CD14-positive monocyte (primary cell): ENCODE measurements at regions of chr3 and their contacts with region 1.

Region 1: DNA sequence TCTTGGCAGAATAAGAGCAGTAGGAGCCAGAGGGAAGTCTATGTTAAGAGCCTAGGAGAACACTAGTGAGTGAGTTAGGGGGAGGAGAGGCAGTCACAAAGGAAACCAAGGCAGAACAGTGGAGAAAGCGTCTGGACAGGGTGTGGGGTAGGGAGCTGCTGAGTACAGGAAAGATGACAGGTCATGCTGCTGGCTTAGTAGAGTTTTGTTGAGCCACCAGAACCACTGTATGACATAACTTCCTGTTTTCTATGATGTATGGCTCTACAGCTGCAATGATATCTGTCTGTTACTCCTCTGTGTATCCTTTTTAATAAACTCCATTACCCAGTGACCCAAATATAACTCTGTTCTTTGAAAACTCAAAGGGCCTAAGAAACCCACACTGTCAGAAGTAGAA is 10.6 kb upstream of the STT3B start:
- DNase-seq: peak; percentile 78 to 92 (median 88)
- H3K4me3 ChIP-seq: peak overlapping the region in 1 of 3 experiments; percentile 41
- H3K4me3 Mint-ChIP-seq: peak overlapping the region; percentile 2 to 55
- H3K27ac ChIP-seq: peak overlapping the region in 1 of 2 donors; percentile 57
- H3K27ac Mint-ChIP-seq: peak overlapping the region; percentile 61 to 91 (median 87)
- H3K4me1 ChIP-seq: peaks cover 8 to 12% of the 10 kb centered on the region in 2 donors
- H3K4me1 Mint-ChIP-seq: peaks cover 12% of the 10 kb centered on the region
- H3K27me3 ChIP-seq: no peaks in the 10 kb centered on the region
- H3K27me3 Mint-ChIP-seq: no peaks in the 10 kb centered on the region
- CTCF ChIP-seq: no peak

Region 2: GRCh38 chr3:31250116-31250777 is 271.9 kb before region 1 on chr3:
- intact Hi-C with region 1: loop called in 1 of 2 experiments (anchors 10 kb)
- DNase-seq: no peak
- H3K4me3 ChIP-seq: no peak overlapping the region
- H3K4me3 Mint-ChIP-seq: no peak overlapping the region
- H3K27ac ChIP-seq: no peak overlapping the region
- H3K27ac Mint-ChIP-seq: no peak overlapping the region
- H3K4me1 ChIP-seq: peaks cover 24 to 31% of the 10 kb centered on the region in 2 donors
- H3K4me1 Mint-ChIP-seq: peaks cover 40% of the 10 kb centered on the region
- H3K27me3 ChIP-seq: no peaks in the 10 kb centered on the region
- H3K27me3 Mint-ChIP-seq: peaks cover 0 to 1% (median 0%) of the 10 kb centered on the region in 3 donors
- CTCF ChIP-seq: no peak

Region 3: DNA sequence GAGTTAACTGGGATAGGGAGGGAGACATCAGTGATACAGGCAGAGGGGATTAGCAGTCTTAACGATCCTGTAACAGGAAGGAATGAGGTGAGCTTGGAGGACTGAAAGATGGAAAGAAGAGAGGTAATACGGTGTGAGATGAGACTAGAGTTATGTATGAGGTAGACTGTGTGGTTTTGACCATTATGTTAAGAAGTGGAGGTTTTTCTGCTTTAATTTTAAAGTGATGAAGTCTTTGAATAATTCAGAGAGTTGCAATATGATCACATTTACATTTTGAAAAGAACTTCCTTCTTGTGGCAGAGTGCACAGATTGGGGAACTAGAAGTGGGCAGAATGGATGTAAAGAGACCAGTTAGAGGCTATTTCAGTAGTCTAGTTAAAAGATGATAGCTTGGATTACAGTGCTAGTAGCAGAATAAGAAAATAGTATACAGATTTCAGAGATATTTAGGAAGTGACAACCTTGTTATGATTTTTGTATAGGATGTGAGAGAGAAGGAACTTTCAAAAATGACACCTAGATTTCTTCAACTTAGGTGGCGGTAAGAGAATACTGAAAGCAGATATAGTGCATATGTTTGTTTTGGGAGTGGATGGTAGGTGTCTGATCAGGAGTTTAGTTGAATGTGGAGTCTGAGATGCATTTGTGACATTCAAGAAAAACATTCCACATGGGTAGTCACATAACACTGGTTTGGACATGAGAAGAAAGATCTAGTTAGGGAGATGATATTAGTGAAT is 51.1 kb after region 1 on chr3:
- intact Hi-C with region 1: loop called in 1 of 2 experiments (anchors 10 kb)
- DNase-seq: peak; percentile 43 to 55 (median 44)
- H3K4me3 ChIP-seq: no peak overlapping the region
- H3K4me3 Mint-ChIP-seq: no peak overlapping the region
- H3K27ac ChIP-seq: peak overlapping the region in 1 of 2 donors; percentile 57
- H3K27ac Mint-ChIP-seq: no peak overlapping the region
- H3K4me1 ChIP-seq: peaks cover 15 to 24% of the 10 kb centered on the region in 2 donors
- H3K4me1 Mint-ChIP-seq: peaks cover 29% of the 10 kb centered on the region
- H3K27me3 ChIP-seq: no peaks in the 10 kb centered on the region
- H3K27me3 Mint-ChIP-seq: no peaks in the 10 kb centered on the region
- CTCF ChIP-seq: no peak